ENCODE measurements at regions of chr1 and their contacts with region 1.

Region 1: GRCh38 chr1:111436726-111437125 is 9.2 kb upstream of the OVGP1 start:
- DNase-seq: peak; percentile 21
- H3K4me3 ChIP-seq: no peak overlapping the region
- H3K27me3 ChIP-seq: no peaks in the 10 kb centered on the region
- CTCF ChIP-seq: no peak

Region 2: GRCh38 chr1:111214074-111214801 is 222.5 kb before region 1 on chr1:
- CTCF ChIA-PET with region 1: no interaction called
- POLR2A ChIA-PET with region 1: no interaction called
- DNase-seq: no peak
- H3K4me3 ChIP-seq: no peak overlapping the region
- H3K27me3 ChIP-seq: no peaks in the 10 kb centered on the region
- CTCF ChIP-seq: no peak

Region 3: GRCh38 chr1:111450185-111450584 is 13.5 kb after region 1 on chr1:
- CTCF ChIA-PET with region 1: interaction called, 11 read pairs
- POLR2A ChIA-PET with region 1: no interaction called
- DNase-seq: no peak
- H3K4me3 ChIP-seq: peak overlapping the region; percentile 75
- H3K27me3 ChIP-seq: no peaks in the 10 kb centered on the region
- CTCF ChIP-seq: no peak

Region 4: GRCh38 chr1:113036639-113037321 is 1600.1 kb after region 1 on chr1:
- CTCF ChIA-PET with region 1: no interaction called
- POLR2A ChIA-PET with region 1: interaction called, 11 read pairs
- DNase-seq: no peak
- H3K4me3 ChIP-seq: no peak overlapping the region
- H3K27me3 ChIP-seq: no peaks in the 10 kb centered on the region
- CTCF ChIP-seq: no peak